OCI-LY7 (cell line): ENCODE measurements at regions of chr2 and their contacts with region 1.

Region 1: GRCh38 chr2:231463698-231464575 is at the start of gene NCL:
- DNase-seq: peak; percentile 92
- H3K4me3 ChIP-seq: peak within 1 kb of the TSS; percentile 94
- H3K27ac ChIP-seq: peak within 1 kb of the TSS; percentile 88
- H3K4me1 ChIP-seq: peaks cover 28% of the 10 kb centered on the region
- CTCF ChIP-seq: no peak
- total RNA-seq, gene NCL: 255 and 413 TPM in 2 replicates

Region 2: GRCh38 chr2:231475965-231476364 is 12.0 kb after region 1 on chr2:
- CTCF ChIA-PET with region 1: interaction called, 3 read pairs
- POLR2A ChIA-PET with region 1: interaction called, 14 read pairs
- intact Hi-C with region 1: no loop called
- DNase-seq: no peak
- H3K4me3 ChIP-seq: no peak overlapping the region
- H3K27ac ChIP-seq: no peak overlapping the region
- H3K4me1 ChIP-seq: no peaks in the 10 kb centered on the region
- CTCF ChIP-seq: no peak

Region 3: GRCh38 chr2:231642631-231643494 is 178.9 kb after region 1 on chr2:
- CTCF ChIA-PET with region 1: no interaction called
- POLR2A ChIA-PET with region 1: no interaction called
- intact Hi-C with region 1: no loop called
- DNase-seq: peak; percentile 66
- H3K4me3 ChIP-seq: peak overlapping the region; percentile 61
- H3K27ac ChIP-seq: peak overlapping the region; percentile 57
- H3K4me1 ChIP-seq: peaks cover 35% of the 10 kb centered on the region
- CTCF ChIP-seq: no peak